ENCODE measurements at regions of chr10 and their contacts with region 1.

Region 1: DNA sequence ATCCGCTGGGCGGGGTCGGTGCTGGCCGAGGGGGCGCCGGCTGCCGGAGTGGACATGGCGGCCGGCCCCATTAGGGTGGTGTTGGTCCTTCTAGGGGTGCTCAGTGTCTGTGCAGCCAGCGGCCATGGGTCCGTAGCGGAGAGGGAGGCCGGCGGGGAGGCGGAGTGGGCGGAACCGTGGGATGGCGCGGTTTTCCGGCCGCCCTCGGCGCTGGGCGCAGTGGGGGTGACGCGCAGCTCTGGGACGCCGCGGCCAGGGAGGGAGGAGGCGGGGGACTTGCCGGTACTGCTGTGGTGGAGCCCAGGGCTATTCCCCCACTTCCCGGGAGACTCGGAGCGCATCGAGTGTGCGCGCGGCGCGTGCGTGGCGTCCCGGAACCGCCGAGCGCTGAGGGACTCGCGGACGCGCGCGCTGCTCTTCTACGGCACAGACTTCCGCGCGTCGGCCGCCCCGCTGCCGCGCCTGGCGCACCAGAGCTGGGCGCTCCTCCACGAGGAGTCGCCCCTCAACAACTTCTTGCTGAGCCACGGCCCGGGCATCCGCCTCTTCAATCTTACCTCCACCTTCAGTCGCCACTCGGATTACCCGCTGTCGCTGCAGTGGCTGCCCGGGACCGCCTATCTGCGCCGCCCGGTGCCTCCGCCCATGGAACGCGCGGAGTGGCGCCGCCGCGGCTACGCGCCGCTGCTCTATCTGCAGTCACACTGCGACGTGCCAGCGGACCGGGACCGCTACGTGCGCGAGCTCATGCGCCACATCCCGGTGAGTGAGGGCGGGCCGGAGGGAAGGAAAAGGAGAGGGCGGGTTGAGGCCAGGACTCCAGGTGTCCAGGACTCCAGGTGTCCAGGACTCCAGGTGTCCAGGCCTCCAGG is 9.3 kb upstream of the CHCHD1 start:
- DNase-seq: peak; percentile 85
- H3K4me3 Mint-ChIP-seq: peak overlapping the region; percentile 94
- H3K27ac Mint-ChIP-seq: peak overlapping the region; percentile 91
- H3K4me1 Mint-ChIP-seq: peaks cover 67% of the 10 kb centered on the region
- H3K27me3 Mint-ChIP-seq: no peaks in the 10 kb centered on the region

Region 2: DNA sequence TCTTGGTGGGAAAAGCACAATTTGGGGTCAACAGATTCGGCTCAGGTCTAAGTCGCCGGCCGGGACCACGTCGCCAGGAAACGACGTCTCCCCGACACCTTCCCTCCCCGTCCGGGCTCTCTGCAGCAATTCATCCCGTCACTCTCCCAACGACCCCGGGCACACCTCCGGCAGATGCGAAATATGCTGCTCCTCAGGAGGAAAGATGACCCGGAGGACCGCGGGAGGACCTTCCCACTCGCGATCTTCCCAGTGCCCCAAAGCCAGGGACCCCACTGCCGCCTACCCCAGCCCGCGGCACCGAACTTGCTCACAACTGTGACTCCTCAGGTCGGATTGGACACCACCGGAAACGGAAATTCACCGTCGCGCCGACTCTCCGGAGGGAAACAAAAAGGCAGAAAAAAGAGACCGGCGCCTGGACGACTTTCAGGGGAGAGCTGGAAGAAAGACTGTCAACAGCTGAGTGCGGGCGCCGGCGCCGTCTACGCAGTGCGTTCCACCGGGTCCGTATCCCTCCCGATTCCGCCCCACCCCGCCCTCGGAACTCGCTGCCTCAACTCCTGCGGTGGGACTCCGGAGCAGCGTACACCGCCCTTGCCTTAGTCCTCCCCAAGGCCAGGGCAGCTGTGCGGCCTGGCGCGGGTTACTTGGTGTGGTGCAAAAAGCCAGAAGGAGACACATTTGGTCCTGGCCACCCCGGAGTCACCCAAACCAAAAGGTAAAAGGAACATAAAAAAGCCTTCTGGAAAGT is 42.2 kb before region 1 on chr10:
- intact Hi-C with region 1: loop called (anchors 1 kb)
- DNase-seq: peak; percentile 92
- H3K4me3 Mint-ChIP-seq: peak overlapping the region; percentile 95
- H3K27ac Mint-ChIP-seq: peak overlapping the region; percentile 97
- H3K4me1 Mint-ChIP-seq: peaks cover 10% of the 10 kb centered on the region
- H3K27me3 Mint-ChIP-seq: peaks cover 2% of the 10 kb centered on the region

Region 3: DNA sequence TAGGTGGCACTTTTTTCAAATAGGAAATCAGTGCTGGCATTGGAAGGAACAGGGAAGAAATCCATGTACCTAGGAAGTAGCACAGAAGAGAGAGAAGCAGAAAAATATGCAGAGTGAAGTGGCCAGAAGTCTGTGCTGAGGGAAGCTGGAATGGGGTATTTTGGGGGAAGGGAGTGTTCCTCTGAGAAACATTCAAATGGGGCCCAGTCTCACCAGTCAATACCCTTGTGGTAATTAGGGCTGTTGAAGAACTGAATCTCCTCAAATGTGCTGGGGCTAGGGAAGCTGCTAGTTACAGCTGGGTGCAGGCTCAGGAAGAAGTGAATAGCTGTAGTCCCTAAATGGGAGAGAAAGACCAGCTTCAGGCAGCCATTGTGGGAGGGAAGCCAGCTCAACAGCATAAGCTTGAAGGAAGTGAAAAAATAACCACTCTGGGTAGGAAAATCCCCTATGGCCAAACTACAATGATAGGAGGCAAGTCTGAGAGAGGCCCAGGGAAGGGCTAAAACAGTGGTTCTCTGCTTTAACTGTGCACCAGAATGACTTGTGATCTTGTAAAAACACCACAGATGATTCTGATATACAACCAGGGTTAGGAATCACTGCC is 31.3 kb after region 1 on chr10:
- intact Hi-C with region 1: loop called (anchors 1 kb)
- DNase-seq: peak; percentile 6
- H3K4me3 Mint-ChIP-seq: peak overlapping the region; percentile 58
- H3K27ac Mint-ChIP-seq: peak overlapping the region; percentile 89
- H3K4me1 Mint-ChIP-seq: peaks cover 43% of the 10 kb centered on the region
- H3K27me3 Mint-ChIP-seq: no peaks in the 10 kb centered on the region

Region 4: DNA sequence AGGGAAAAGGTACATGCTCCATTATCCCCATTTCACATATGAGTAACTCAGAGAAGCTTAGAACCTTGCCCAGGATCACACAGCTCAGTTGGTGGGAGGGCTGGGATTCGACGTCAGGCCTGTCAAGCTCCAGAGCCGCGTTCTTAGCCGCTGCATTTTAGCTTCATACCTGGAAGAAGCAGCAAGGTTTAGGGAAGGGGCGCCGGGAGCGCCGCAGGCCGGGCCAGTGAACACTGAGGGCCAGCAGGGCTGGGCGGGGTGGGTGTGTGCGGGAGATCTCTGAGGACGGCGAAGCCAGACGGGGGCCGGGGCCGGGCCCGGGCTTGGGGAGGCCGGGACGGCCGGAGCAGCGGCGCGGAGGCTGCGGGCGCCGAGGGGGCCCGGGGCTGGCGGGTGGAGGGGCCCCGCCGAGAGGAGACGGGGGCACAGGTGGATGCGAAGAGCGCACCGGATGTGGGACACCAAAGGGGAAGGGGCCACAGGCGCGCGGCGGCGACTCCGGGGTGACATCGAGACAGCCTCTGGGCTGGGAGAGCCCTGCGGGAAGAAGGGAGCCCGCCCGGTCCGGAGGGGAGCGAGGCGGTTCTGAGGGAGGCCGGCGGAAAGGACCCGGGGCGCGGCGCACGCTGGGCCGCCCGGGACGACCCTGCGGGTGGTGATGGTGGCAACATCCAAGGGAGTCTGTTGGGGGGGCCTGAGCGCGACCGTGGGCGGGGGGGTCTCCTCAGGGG is 38.4 kb after region 1 on chr10:
- intact Hi-C with region 1: loop called (anchors 2 kb)
- DNase-seq: peak; percentile 54
- H3K4me3 Mint-ChIP-seq: peak overlapping the region; percentile 97
- H3K27ac Mint-ChIP-seq: peak overlapping the region; percentile 98
- H3K4me1 Mint-ChIP-seq: peaks cover 50% of the 10 kb centered on the region
- H3K27me3 Mint-ChIP-seq: no peaks in the 10 kb centered on the region

Region 5: GRCh38 chr10:73940634-73941221 is 168.2 kb after region 1 on chr10:
- intact Hi-C with region 1: no loop called
- DNase-seq: peak; percentile 80
- H3K4me3 Mint-ChIP-seq: no peak overlapping the region
- H3K27ac Mint-ChIP-seq: no peak overlapping the region
- H3K4me1 Mint-ChIP-seq: peaks cover 24% of the 10 kb centered on the region
- H3K27me3 Mint-ChIP-seq: peaks cover 15% of the 10 kb centered on the region